Ovary (tissue), 10 donors: ENCODE measurements at regions of chr6 and their contacts with region 1.

Region 1: DNA sequence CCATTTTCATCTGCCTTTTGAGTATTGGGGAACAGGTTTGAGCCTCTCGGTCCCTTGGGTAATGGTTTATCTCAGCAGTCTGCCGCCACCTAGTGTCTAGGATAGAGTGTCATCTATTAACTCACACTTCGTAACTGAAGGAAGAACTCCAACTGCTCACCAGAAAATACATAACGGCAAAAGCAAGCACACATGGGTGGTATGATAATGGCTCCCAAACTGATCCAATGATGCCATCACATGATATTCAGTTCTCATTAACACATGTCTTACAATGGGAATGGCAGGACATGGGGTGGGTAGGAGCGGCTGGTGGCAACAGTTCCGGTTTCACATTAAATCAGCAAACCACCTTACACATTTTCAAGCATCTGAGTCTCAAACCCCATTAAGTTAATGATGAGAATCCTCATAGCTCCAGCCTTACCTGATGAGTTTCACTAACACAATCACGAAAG is 110.7 kb upstream of the PHACTR1 start:
- DNase-seq: peak in 2 of 5 donors; percentile 19 to 30
- H3K4me3 ChIP-seq: no peak overlapping the region
- H3K27ac ChIP-seq: no peak overlapping the region
- H3K4me1 ChIP-seq: peaks cover 1% of the 10 kb centered on the region
- H3K27me3 ChIP-seq: no peaks in the 10 kb centered on the region
- CTCF ChIP-seq: peak in 2 of 3 donors; percentile 32 to 43
- EP300 ChIP-seq: no peak
- POLR2A ChIP-seq: no peak

Region 2: GRCh38 chr6:11585426-11586016 is 1020.4 kb before region 1 on chr6:
- intact Hi-C with region 1: loop called in 1 of 4 experiments (anchors 10 kb)
- DNase-seq: no peak
- H3K4me3 ChIP-seq: no peak overlapping the region
- H3K27ac ChIP-seq: no peak overlapping the region
- H3K4me1 ChIP-seq: peaks cover 4% of the 10 kb centered on the region
- H3K27me3 ChIP-seq: no peaks in the 10 kb centered on the region
- CTCF ChIP-seq: peak; percentile 26 to 54 (median 32)
- EP300 ChIP-seq: no peak
- POLR2A ChIP-seq: no peak

Region 3: GRCh38 chr6:11653028-11653583 is 952.8 kb before region 1 on chr6:
- intact Hi-C with region 1: loop called in 1 of 4 experiments (anchors 10 kb)
- DNase-seq: peak; percentile 35 to 49 (median 46)
- H3K4me3 ChIP-seq: no peak overlapping the region
- H3K27ac ChIP-seq: no peak overlapping the region
- H3K4me1 ChIP-seq: peaks cover 16% of the 10 kb centered on the region
- H3K27me3 ChIP-seq: no peaks in the 10 kb centered on the region
- CTCF ChIP-seq: no peak
- EP300 ChIP-seq: no peak
- POLR2A ChIP-seq: no peak

Region 4: DNA sequence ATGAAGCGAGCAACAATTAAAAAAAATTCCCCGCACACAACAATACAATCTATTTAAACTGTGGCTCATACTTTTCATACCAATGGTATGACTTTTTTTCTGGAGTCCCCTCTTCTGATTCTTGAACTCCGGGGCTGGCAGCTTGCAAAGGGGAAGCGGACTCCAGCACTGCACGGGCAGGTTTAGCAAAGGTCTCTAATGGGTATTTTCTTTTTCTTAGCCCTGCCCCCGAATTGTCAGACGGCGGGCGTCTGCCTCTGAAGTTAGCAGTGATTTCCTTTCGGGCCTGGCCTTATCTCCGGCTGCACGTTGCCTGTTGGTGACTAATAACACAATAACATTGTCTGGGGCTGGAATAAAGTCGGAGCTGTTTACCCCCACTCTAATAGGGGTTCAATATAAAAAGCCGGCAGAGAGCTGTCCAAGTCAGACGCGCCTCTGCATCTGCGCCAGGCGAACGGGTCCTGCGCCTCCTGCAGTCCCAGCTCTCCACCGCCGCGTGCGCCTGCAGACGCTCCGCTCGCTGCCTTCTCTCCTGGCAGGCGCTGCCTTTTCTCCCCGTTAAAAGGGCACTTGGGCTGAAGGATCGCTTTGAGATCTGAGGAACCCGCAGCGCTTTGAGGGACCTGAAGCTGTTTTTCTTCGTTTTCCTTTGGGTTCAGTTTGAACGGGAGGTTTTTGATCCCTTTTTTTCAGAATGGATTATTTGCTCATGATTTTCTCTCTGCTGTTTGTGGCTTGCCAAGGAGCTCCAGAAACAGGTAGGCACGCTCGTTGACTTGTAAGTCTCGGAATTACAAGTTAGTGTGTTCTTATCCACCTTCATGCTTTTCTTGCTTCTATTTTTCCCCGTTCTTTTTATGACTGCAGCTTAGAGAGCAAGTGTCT is 315.7 kb before region 1 on chr6 and contains the start of gene EDN1:
- intact Hi-C with region 1: loop called in 1 of 4 experiments (anchors 10 kb)
- DNase-seq: peak; percentile 40 to 68 (median 58)
- H3K4me3 ChIP-seq: peak within 1 kb of the TSS; percentile 30
- H3K27ac ChIP-seq: no peak within 1 kb of the TSS
- H3K4me1 ChIP-seq: no peaks in the 10 kb centered on the region
- H3K27me3 ChIP-seq: no peaks in the 10 kb centered on the region
- CTCF ChIP-seq: peak in 1 of 3 donors; percentile 21
- EP300 ChIP-seq: no peak
- POLR2A ChIP-seq: peak; percentile 23
- total RNA-seq, gene EDN1: 0.95 to 11.1 (median 3.1) TPM